ENCODE measurements at regions of chr18 and their contacts with region 1.

Region 1: DNA sequence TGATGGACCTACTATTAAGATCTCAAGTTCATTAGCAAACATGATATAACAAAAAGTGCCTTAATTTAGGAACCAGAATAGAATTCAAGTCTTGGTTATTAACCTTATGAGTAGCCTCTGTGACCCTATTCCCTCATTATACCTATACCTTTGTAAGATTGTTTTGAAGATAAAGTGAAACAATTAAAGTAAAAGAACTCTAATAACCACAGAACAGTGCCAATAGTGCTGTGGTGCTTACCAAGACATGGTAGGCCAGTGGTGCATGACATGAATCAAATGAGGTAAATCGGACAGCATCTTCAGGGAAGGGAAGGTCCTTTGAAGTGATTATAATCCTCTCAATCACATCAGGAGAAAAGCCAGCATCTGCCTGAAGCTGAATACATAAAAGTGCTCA is 36.4 kb downstream of the METTL4 start:
- DNase-seq: peak; percentile 88
- H3K4me3 ChIP-seq: peak overlapping the region; percentile 48
- H3K27ac ChIP-seq: peak overlapping the region; percentile 99
- H3K4me1 ChIP-seq: peaks cover 79% of the 10 kb centered on the region
- CTCF ChIP-seq: no peak

Region 2: DNA sequence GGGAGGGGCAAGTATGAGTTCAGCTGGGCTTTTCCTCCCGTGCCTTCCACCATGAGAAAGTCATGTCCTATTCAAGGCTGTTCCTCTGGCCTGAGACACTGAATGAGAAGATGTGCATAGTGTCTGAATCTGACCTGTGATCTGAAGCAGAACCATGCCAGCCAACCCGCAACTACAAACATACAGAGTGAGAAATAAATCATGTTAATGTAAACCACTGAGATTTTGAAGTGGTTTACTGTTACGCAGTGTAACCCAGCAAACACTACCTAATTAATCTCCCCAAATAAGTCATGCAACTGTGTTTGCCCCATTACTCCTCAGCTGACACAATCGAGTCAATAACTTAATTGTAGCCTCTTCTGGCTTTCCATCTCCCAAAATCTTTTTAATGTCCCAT is 12.8 kb before region 1 on chr18:
- CTCF ChIA-PET with region 1: no interaction called
- POLR2A ChIA-PET with region 1: interaction called, 17 read pairs
- intact Hi-C with region 1: no loop called
- DNase-seq: no peak
- H3K4me3 ChIP-seq: no peak overlapping the region
- H3K27ac ChIP-seq: no peak overlapping the region
- H3K4me1 ChIP-seq: no peaks in the 10 kb centered on the region
- CTCF ChIP-seq: no peak

Measured in OCI-LY7 (cell line).